ENCODE measurements at regions of chr4 and their contacts with region 1.

Region 1: DNA sequence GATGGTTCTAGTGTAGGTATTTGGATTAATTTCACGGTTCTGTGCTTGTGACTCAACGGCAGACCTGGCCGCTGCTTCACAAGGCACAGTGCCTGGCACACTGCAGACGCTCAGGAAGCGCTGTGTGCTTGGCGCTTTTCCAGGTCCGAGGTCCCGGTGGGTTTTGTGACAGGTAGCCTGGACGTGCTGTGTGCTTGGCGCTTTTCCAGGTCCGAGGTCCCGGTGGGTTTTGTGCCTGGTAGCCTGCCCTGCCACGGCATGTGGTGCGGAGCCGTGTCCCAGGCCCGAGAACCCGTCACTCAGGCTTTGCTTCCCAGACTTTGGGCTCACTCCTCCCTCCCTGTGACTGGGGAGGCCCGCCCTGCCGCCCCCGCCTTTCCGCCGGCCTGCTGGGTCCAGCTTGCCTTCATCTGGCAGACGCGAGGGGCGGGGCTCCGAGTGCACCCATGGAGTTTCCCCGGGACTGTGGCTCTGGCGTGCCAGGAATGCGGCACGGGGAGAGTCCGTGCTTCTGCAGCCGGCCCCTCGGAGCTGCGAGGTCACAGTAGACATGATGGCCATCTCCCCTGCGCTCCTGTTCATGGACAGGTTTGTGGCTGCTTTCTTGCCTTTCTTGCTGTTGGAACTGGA is 44.2 kb downstream of the TBC1D14 start:
- DNase-seq: peak; percentile 95 to 96
- H3K4me3 ChIP-seq: peak overlapping the region; percentile 37
- H3K4me3 Mint-ChIP-seq: peak overlapping the region; percentile 76
- H3K27ac Mint-ChIP-seq: peak overlapping the region; percentile 79
- H3K4me1 ChIP-seq: peaks cover 32% of the 10 kb centered on the region
- H3K4me1 Mint-ChIP-seq: peaks cover 35% of the 10 kb centered on the region
- H3K27me3 ChIP-seq: no peaks in the 10 kb centered on the region
- H3K27me3 Mint-ChIP-seq: no peaks in the 10 kb centered on the region
- CTCF ChIP-seq: no peak

Region 2: GRCh38 chr4:6892190-6892908 is 61.5 kb before region 1 on chr4:
- CTCF ChIA-PET with region 1: no interaction called
- POLR2A ChIA-PET with region 1: interaction called, 7 read pairs
- intact Hi-C with region 1: loop called (anchors 5 kb)
- DNase-seq: peak; percentile 69 to 76
- H3K4me3 ChIP-seq: no peak overlapping the region
- H3K4me3 Mint-ChIP-seq: peak overlapping the region; percentile 34
- H3K27ac Mint-ChIP-seq: peak overlapping the region; percentile 89
- H3K4me1 ChIP-seq: peaks cover 33% of the 10 kb centered on the region
- H3K4me1 Mint-ChIP-seq: peaks cover 25% of the 10 kb centered on the region
- H3K27me3 ChIP-seq: no peaks in the 10 kb centered on the region
- H3K27me3 Mint-ChIP-seq: no peaks in the 10 kb centered on the region
- CTCF ChIP-seq: peak in 1 of 2 experiments; percentile 30

Region 3: GRCh38 chr4:6909073-6909965 is 44.5 kb before region 1 on chr4 and contains the start of gene TBC1D14:
- CTCF ChIA-PET with region 1: interaction called, 3 read pairs
- POLR2A ChIA-PET with region 1: interaction called, 5 read pairs
- intact Hi-C with region 1: loop called (anchors 1 kb)
- DNase-seq: peak; percentile 90
- H3K4me3 ChIP-seq: peak within 1 kb of the TSS; percentile 83
- H3K4me3 Mint-ChIP-seq: peak within 1 kb of the TSS; percentile 94
- H3K27ac Mint-ChIP-seq: peak within 1 kb of the TSS; percentile 89
- H3K4me1 ChIP-seq: peaks cover 23% of the 10 kb centered on the region
- H3K4me1 Mint-ChIP-seq: peaks cover 27% of the 10 kb centered on the region
- H3K27me3 ChIP-seq: no peaks in the 10 kb centered on the region
- H3K27me3 Mint-ChIP-seq: no peaks in the 10 kb centered on the region
- CTCF ChIP-seq: peak in 1 of 2 experiments; percentile 16
- total RNA-seq, gene TBC1D14: 54.0 and 57.6 TPM in 2 replicates

Region 4: GRCh38 chr4:6917461-6918271 is 36.2 kb before region 1 on chr4:
- CTCF ChIA-PET with region 1: interaction called, 3 read pairs
- POLR2A ChIA-PET with region 1: no interaction called
- intact Hi-C with region 1: loop called (anchors 2 kb)
- DNase-seq: peak; percentile 84 to 88
- H3K4me3 ChIP-seq: no peak overlapping the region
- H3K4me3 Mint-ChIP-seq: peak overlapping the region; percentile 57
- H3K27ac Mint-ChIP-seq: peak overlapping the region; percentile 91
- H3K4me1 ChIP-seq: peaks cover 20% of the 10 kb centered on the region
- H3K4me1 Mint-ChIP-seq: peaks cover 28% of the 10 kb centered on the region
- H3K27me3 ChIP-seq: no peaks in the 10 kb centered on the region
- H3K27me3 Mint-ChIP-seq: no peaks in the 10 kb centered on the region
- CTCF ChIP-seq: peak in 1 of 2 experiments; percentile 66

Region 5: GRCh38 chr4:6942238-6942800 is 11.5 kb before region 1 on chr4:
- CTCF ChIA-PET with region 1: interaction called, 3 read pairs
- POLR2A ChIA-PET with region 1: interaction called, 7 read pairs
- intact Hi-C with region 1: loop called (anchors 1 kb)
- DNase-seq: peak in 1 of 2 experiments; percentile 48
- H3K4me3 ChIP-seq: no peak overlapping the region
- H3K4me3 Mint-ChIP-seq: peak overlapping the region; percentile 55
- H3K27ac Mint-ChIP-seq: peak overlapping the region; percentile 88
- H3K4me1 ChIP-seq: peaks cover 48% of the 10 kb centered on the region
- H3K4me1 Mint-ChIP-seq: peaks cover 33% of the 10 kb centered on the region
- H3K27me3 ChIP-seq: no peaks in the 10 kb centered on the region
- H3K27me3 Mint-ChIP-seq: no peaks in the 10 kb centered on the region
- CTCF ChIP-seq: no peak

Region 6: DNA sequence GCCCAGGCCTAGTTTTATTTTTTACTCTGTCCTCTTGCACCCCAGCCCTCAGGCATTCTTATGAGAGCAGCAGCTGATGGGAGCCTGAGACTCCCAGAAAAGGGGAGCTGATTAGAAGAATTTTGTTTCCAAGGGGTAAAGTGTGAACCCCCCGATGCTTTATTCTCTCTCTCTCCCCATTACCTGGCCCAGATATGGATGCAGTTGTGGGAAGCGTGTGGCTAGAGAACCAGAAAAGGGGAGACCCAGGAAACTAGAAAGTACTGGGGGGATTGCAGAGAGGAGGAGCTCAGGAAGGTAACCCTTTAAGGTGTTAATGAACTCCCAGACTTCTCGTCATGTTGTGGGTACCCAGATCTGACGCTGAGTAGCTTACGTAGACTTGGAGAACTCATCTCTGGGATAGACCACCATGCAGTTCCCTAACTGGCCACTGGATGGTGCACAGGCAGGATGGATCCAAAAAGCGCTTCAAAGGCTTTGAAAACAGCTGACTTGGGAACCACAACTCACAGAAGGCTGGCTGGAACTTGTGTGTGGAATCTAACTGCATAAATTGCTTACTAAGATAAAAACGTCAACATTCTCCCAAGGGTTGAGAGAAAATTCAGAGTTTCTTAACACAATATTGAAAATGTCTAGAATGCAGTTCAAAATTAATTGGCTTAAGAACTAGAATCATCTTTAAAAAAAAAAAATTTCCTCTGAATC is 20.4 kb after region 1 on chr4:
- CTCF ChIA-PET with region 1: interaction called, 8 read pairs
- POLR2A ChIA-PET with region 1: no interaction called
- intact Hi-C with region 1: loop called (anchors 1 kb)
- DNase-seq: peak; percentile 77 to 86
- H3K4me3 ChIP-seq: no peak overlapping the region
- H3K4me3 Mint-ChIP-seq: no peak overlapping the region
- H3K27ac Mint-ChIP-seq: no peak overlapping the region
- H3K4me1 ChIP-seq: peaks cover 18% of the 10 kb centered on the region
- H3K4me1 Mint-ChIP-seq: peaks cover 15% of the 10 kb centered on the region
- H3K27me3 ChIP-seq: no peaks in the 10 kb centered on the region
- H3K27me3 Mint-ChIP-seq: no peaks in the 10 kb centered on the region
- CTCF ChIP-seq: peak; percentile 84 to 91